ENCODE measurements at regions of chr16 and their contacts with region 1.

Region 1: GRCh38 chr16:50281964-50282538 is 15.7 kb downstream of the ADCY7 start:
- DNase-seq: no peak
- H3K4me3 ChIP-seq: no peak overlapping the region
- H3K27ac ChIP-seq: peak overlapping the region; percentile 22
- H3K4me1 ChIP-seq: peaks cover 17% of the 10 kb centered on the region
- H3K27me3 ChIP-seq: no peaks in the 10 kb centered on the region
- CTCF ChIP-seq: no peak
- POLR2A ChIP-seq: no peak

Region 2: GRCh38 chr16:50354629-50355456 is 72.8 kb after region 1 on chr16:
- intact Hi-C with region 1: no loop called
- DNase-seq: no peak
- H3K4me3 ChIP-seq: no peak overlapping the region
- H3K27ac ChIP-seq: no peak overlapping the region
- H3K4me1 ChIP-seq: peaks cover 3% of the 10 kb centered on the region
- H3K27me3 ChIP-seq: no peaks in the 10 kb centered on the region
- CTCF ChIP-seq: peak in 2 of 3 experiments; percentile 27 to 37
- POLR2A ChIP-seq: no peak

Region 3: DNA sequence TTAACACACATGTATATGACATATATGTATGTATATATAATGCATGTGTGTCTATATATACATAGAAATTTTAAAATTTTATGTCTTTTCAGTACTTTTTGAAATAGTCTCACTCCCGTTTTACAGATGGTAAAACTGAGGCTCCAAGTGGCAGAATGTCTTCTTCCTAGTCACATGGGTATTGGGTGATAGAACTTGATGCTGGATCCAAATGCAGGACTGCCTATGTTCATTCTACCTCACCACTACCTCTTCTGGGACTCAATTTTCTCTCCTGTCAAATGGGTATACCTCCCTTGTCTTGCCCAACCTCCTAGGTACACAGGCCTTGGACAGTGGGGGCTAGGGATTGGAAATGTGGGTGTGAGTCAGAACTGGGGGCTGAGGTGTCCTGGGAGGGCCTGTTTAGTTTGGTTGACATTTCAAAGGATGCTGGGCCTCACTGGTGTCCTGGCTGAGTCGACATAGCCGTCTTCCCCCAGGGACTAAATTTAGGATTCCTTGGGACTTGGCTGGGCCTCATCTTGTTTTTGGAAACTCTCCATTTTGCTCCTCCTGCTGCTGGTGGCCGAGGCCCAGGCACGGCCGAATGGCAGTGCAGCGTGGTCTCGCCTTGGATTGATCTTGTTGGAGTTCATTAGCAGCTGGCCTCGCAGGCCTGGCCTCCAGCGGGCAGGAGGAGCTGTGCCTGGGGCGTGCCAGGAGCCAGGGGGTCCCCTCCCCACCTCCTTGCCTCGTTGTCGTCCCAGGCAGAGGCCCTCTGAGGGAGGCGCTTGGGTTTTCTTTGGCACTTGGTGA is 292.1 kb after region 1 on chr16:
- intact Hi-C with region 1: loop called (anchors 5 kb)
- DNase-seq: no peak
- H3K4me3 ChIP-seq: no peak overlapping the region
- H3K27ac ChIP-seq: peak overlapping the region; percentile 69
- H3K4me1 ChIP-seq: peaks cover 30% of the 10 kb centered on the region
- H3K27me3 ChIP-seq: no peaks in the 10 kb centered on the region
- CTCF ChIP-seq: no peak
- POLR2A ChIP-seq: no peak

Measured in vagina (tissue), 2 donors.